ENCODE measurements at regions of chr19 and their contacts with region 1.

Region 1: DNA sequence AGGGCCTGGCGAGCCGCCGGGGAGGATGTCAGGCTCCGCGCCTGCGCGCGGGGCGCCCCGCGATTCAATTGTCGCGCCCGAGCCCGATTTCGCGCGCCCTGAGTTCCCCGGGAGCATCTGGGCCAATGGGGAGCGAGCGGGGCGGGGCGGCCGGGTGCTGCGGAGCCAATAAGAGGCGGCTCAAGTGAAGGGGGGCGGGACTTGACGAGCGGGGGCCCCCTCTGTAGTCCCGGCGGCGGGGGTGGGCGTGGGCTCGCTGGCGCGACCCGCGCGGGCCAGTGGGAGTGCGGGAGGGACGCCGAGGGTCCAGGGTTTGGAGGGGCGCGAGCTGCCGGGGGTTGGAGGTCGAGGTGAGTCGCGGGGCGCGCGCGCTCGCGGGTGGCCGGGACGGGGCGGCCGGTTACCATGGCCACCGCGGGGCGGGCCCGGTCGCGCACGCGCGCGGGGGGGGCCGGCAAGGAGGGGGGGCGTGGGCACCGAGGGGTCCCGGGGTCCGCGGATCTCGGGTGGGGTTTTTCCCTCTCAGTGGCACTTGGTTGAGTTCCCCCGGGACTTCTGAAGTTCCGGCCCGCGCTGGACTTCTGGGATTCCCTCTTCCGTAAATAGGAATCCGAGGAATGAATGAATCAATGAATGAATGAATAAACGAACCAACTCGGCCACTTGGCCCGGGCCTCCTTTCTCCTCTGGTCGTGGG is 744 bp downstream of the UHRF1 start:
- DNase-seq: peak; percentile 97

Region 2: GRCh38 chr19:4815426-4816201 is 94.4 kb before region 1 on chr19:
- intact Hi-C with region 1: loop called (anchors 5 kb)
- DNase-seq: peak; percentile 94

Region 3: GRCh38 chr19:4851551-4852290 is 58.3 kb before region 1 on chr19:
- intact Hi-C with region 1: loop called in 1 of 2 experiments (anchors 10 kb)
- DNase-seq: peak; percentile 88

Region 4: GRCh38 chr19:4870025-4870700 is 39.9 kb before region 1 on chr19:
- intact Hi-C with region 1: loop called in 1 of 2 experiments (anchors 5 kb)
- DNase-seq: peak; percentile 88

Region 5: DNA sequence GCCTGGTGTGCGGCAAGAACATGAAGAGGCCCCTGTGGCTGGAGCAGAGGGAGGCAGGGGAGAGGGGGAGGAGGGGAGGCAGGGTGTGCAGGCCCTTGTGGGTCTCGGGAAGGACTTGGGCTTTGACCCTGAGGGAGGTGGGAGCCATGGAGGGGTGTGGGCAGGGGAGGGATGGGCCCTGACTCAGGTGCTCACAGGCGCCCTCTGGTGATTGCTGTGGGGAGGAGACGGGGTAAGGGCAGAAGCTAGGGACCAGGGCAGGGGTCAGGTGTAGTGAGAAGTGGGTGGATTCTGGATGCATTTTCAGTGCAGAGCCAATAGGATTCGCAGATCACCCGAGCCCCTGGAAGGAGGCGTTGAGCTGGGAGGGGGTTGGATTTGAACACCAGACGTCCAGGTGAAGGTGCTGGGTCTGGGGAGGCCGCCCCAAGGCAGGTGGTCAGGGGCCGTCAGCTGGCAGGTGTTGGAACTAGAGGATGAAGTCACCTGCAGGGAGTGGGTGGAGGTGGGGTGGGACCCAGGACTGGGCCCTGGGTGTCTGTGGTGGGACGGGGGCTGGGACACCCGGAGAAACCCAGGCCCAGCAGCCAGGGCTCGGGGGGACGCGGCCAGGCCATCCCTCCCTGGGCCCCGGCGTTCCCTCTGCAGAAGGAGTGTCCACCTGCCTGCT is 244.2 kb after region 1 on chr19:
- intact Hi-C with region 1: no loop called
- DNase-seq: peak; percentile 82

Measured in posterior vena cava (tissue), 2 donors.